Colonic mucosa (tissue), 4 donors: ENCODE measurements at regions of chr9 and their contacts with region 1.

Region 1: GRCh38 chr9:122464633-122465567 is 12.8 kb downstream of the OR1J1 start:
- DNase-seq: peak; percentile 81
- H3K4me3 ChIP-seq: peak overlapping the region; percentile 30
- H3K27ac ChIP-seq: peak overlapping the region; percentile 49
- H3K4me1 ChIP-seq: no peaks in the 10 kb centered on the region
- H3K27me3 ChIP-seq: no peaks in the 10 kb centered on the region
- CTCF ChIP-seq: peak; percentile 77

Region 2: GRCh38 chr9:122810306-122810946 is 345.5 kb after region 1 on chr9:
- intact Hi-C with region 1: loop called (anchors 2 kb)
- DNase-seq: peak; percentile 71
- H3K4me3 ChIP-seq: no peak overlapping the region
- H3K27ac ChIP-seq: no peak overlapping the region
- H3K4me1 ChIP-seq: no peaks in the 10 kb centered on the region
- H3K27me3 ChIP-seq: no peaks in the 10 kb centered on the region
- CTCF ChIP-seq: peak; percentile 74